ENCODE measurements at regions of chr12 and their contacts with region 1.

Region 1: DNA sequence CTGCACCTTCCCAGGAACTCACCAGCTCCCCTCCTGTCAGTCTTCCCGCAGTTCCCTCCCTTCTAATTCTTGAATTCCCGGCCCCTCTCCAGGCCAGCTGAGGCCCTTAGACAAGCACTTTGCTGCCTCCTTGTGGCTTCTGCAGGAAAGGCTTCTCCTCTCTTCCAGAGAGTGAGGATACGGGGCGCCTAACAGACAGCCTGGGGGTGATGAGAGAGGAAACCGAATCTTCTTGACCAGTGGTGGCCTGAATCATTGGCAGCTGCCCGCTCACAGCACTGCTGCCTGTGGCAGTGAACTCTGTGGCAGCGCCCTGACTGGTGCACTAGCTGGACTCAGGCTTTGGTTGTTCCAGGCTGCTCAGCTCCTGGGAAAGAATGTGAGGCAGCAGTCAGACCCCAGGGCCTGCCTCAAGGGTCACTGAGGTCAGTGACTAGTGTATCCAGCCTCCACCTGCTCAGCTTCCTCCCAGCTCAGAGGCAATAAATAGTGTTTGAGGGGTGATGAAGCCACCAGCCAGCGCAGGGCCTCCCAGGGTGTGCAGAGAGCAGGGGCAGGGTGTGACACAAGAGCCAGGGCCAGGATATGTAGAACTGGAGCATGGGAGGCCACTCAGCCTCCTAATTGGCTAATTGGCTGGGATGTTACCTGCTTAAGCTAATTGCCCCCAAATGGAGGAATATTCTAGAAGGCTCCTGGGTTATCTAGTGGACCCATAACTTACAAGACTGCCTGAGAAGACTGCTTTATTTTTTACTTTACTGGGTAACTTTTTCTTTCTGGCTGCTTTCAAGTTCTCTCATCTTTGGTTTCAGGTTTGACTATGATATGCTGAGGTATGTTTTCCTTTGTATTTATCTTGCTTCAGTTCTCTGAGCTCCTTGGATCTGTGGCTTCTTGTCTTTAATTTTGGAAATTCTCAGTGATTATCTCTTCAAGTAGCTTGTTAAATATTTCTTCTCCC is 12.9 kb upstream of the MCRS1 start:
- DNase-seq: peak; percentile 76
- ATAC-seq: peak; percentile 90
- H3K4me3 Mint-ChIP-seq: no peak overlapping the region
- H3K27ac Mint-ChIP-seq: peak overlapping the region; percentile 7
- H3K4me1 Mint-ChIP-seq: peaks cover 15% of the 10 kb centered on the region
- H3K27me3 Mint-ChIP-seq: no peaks in the 10 kb centered on the region
- CTCF ChIP-seq: peak; percentile 77

Region 2: GRCh38 chr12:49331380-49332222 is 249.3 kb before region 1 on chr12:
- CTCF ChIA-PET with region 1: no interaction called
- POLR2A ChIA-PET with region 1: no interaction called
- intact Hi-C with region 1: no loop called
- DNase-seq: peak; percentile 36
- ATAC-seq: peak; percentile 58
- H3K4me3 Mint-ChIP-seq: no peak overlapping the region
- H3K27ac Mint-ChIP-seq: no peak overlapping the region
- H3K4me1 Mint-ChIP-seq: peaks cover 3% of the 10 kb centered on the region
- H3K27me3 Mint-ChIP-seq: peaks cover 36% of the 10 kb centered on the region
- CTCF ChIP-seq: peak; percentile 56

Region 3: GRCh38 chr12:49515266-49515665 is 65.6 kb before region 1 on chr12:
- CTCF ChIA-PET with region 1: interaction called, 15 read pairs
- POLR2A ChIA-PET with region 1: no interaction called
- intact Hi-C with region 1: no loop called
- DNase-seq: no peak
- ATAC-seq: no peak
- H3K4me3 Mint-ChIP-seq: no peak overlapping the region
- H3K27ac Mint-ChIP-seq: no peak overlapping the region
- H3K4me1 Mint-ChIP-seq: peaks cover 10% of the 10 kb centered on the region
- H3K27me3 Mint-ChIP-seq: no peaks in the 10 kb centered on the region
- CTCF ChIP-seq: no peak

Region 4: DNA sequence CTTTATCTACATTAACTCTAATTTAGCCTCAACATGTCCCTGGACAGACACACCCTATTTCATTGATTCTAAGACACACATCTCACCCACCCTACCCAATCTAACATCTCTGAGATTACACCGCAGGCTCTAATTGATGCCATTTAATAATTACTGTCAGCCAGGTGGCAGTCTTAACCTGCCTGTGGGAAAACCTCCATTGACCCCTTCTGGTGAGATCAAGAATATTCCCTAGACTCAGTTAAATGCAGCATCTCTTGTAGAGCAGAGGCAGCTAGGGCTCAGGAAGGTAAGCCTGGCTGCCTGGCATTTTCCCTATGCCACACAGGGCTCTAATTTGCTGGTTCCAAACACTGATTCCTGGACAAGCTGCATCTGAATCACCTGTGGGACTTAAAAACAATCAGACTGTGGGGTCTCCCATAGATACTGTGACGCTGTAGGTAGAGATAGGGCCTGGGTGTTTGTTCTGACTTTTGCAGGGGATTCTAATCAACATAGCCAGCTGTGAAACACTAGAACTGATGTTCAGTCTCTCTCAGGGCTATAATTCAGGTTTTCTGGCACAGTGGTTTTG is 27.3 kb before region 1 on chr12:
- CTCF ChIA-PET with region 1: interaction called, 42 read pairs
- POLR2A ChIA-PET with region 1: interaction called, 3 read pairs
- intact Hi-C with region 1: no loop called
- DNase-seq: peak; percentile 26
- ATAC-seq: peak; percentile 64
- H3K4me3 Mint-ChIP-seq: no peak overlapping the region
- H3K27ac Mint-ChIP-seq: no peak overlapping the region
- H3K4me1 Mint-ChIP-seq: peaks cover 3% of the 10 kb centered on the region
- H3K27me3 Mint-ChIP-seq: no peaks in the 10 kb centered on the region
- CTCF ChIP-seq: peak; percentile 73

Region 5: GRCh38 chr12:49559011-49559675 is 21.7 kb before region 1 on chr12:
- CTCF ChIA-PET with region 1: interaction called, 42 read pairs
- POLR2A ChIA-PET with region 1: no interaction called
- intact Hi-C with region 1: no loop called
- DNase-seq: no peak
- ATAC-seq: no peak
- H3K4me3 Mint-ChIP-seq: no peak overlapping the region
- H3K27ac Mint-ChIP-seq: no peak overlapping the region
- H3K4me1 Mint-ChIP-seq: peaks cover 25% of the 10 kb centered on the region
- H3K27me3 Mint-ChIP-seq: no peaks in the 10 kb centered on the region
- CTCF ChIP-seq: no peak

Region 6: DNA sequence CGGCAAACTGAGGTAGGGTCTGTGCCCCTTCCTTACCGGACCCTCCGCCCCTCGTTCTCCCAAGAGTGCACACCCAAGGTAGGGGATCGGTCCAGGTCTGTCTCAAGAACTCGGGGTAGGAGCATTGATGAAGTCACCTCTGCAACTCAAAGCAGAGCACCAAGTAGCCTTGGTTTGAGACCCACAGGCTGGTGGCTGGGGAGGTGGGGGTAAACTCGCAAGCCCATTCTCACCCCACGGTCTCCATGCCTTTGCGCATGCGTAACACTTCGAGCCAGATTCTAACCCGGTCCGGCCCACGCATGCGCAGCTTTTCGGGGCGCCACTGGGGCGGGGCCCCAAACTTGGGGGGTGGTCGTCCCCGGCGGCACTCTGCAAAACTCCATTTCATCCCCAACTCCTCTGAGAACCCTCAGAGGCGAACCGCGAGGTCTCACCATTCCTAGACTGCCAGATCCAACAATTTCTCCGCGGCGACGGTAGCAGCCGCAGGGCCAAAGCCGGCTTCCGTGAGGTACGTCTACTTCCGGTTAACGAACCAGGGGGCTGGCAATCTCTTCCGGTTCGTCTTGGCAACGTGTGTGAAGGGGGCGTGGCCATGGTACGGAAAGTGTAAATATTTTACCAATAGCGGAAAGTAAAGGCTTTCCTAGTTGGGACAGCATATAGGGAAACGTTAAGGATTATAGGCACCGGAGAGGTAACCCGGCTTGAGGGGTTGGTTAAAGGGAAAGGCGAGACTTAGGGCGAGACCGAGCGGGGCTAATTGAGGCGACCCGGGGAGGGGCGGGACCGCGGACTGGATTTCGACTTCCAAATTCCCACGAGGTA is 13.0 kb before region 1 on chr12 and contains the start of gene MCRS1:
- CTCF ChIA-PET with region 1: interaction called, 19 read pairs
- POLR2A ChIA-PET with region 1: interaction called, 6 read pairs
- intact Hi-C with region 1: no loop called
- DNase-seq: peak; percentile 93
- ATAC-seq: peak; percentile 92
- H3K4me3 Mint-ChIP-seq: peak within 1 kb of the TSS; percentile 100
- H3K27ac Mint-ChIP-seq: peak within 1 kb of the TSS; percentile 96
- H3K4me1 Mint-ChIP-seq: peaks cover 50% of the 10 kb centered on the region
- H3K27me3 Mint-ChIP-seq: no peaks in the 10 kb centered on the region
- CTCF ChIP-seq: no peak
- total RNA-seq, gene MCRS1: 57.1 to 61.1 TPM

Region 7: DNA sequence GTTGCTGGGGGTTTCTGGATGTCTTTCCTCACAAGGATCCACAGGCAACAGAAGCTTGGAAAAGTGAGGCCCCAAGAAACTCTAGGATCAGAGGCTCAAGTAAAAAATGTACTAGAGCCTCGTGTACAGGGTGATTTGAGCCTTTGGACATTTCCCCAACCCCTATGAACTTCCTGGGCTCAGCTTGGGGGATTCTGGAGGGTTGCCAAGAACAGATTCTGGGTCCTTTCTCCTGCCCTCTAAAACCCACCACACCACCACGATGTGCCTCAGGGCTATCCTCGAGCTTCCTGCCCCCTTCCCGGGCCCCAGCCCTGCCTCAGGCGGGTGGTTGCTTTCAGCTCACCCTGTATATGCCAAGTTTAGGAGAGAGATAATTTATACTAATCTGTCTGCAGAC is 24.0 kb after region 1 on chr12:
- CTCF ChIA-PET with region 1: interaction called, 16 read pairs
- POLR2A ChIA-PET with region 1: no interaction called
- intact Hi-C with region 1: no loop called
- DNase-seq: no peak
- ATAC-seq: no peak
- H3K4me3 Mint-ChIP-seq: no peak overlapping the region
- H3K27ac Mint-ChIP-seq: no peak overlapping the region
- H3K4me1 Mint-ChIP-seq: peaks cover 2% of the 10 kb centered on the region
- H3K27me3 Mint-ChIP-seq: peaks cover 4% of the 10 kb centered on the region
- CTCF ChIP-seq: no peak

Region 8: GRCh38 chr12:49644620-49644994 is 63.8 kb after region 1 on chr12:
- CTCF ChIA-PET with region 1: no interaction called
- POLR2A ChIA-PET with region 1: no interaction called
- intact Hi-C with region 1: no loop called
- DNase-seq: peak; percentile 88
- ATAC-seq: peak; percentile 96
- H3K4me3 Mint-ChIP-seq: no peak overlapping the region
- H3K27ac Mint-ChIP-seq: peak overlapping the region; percentile 77
- H3K4me1 Mint-ChIP-seq: peaks cover 15% of the 10 kb centered on the region
- H3K27me3 Mint-ChIP-seq: no peaks in the 10 kb centered on the region
- CTCF ChIP-seq: peak; percentile 92

Measured in activated CD8-positive, alpha-beta T cell treated with anti-CD3 and anti-CD28 coated beads for 36 hours (primary cell).